Ovary (tissue), 10 donors: ENCODE measurements at regions of chrX and their contacts with region 1.

Region 1: GRCh38 chrX:2934715-2935710 is 5.9 kb upstream of the ARSD start:
- DNase-seq: no peak
- H3K4me3 ChIP-seq: no peak overlapping the region
- H3K27ac ChIP-seq: no peak overlapping the region
- H3K4me1 ChIP-seq: no peaks in the 10 kb centered on the region
- H3K27me3 ChIP-seq: no peaks in the 10 kb centered on the region
- CTCF ChIP-seq: no peak
- EP300 ChIP-seq: no peak
- POLR2A ChIP-seq: no peak

Region 2: GRCh38 chrX:2272337-2272736 is 662.7 kb before region 1 on chrX:
- intact Hi-C with region 1: no loop called
- DNase-seq: no peak
- H3K4me3 ChIP-seq: no peak overlapping the region
- H3K27ac ChIP-seq: no peak overlapping the region
- H3K4me1 ChIP-seq: no peaks in the 10 kb centered on the region
- H3K27me3 ChIP-seq: no peaks in the 10 kb centered on the region
- CTCF ChIP-seq: no peak
- EP300 ChIP-seq: no peak
- POLR2A ChIP-seq: no peak

Region 3: DNA sequence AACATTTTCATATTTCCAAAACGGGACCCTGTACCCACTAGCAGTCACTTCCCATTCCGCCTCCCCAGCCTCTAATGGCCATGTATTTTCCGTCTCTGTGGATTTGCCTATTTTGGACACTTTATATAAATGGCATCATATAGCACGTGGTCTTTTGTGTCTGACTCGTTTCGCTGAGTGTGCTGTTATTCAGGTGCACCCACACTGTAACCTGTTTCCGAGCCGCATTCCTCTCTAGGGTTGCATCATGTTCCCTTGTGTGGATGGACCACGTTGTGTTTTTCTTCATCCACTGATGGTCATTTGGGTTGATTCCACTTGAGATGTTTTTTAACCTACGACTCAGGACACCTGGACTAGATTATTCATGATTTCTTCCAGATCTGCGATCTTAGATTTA is 863.5 kb after region 1 on chrX:
- intact Hi-C with region 1: loop called in 1 of 4 experiments (anchors 10 kb)
- DNase-seq: no peak
- H3K4me3 ChIP-seq: no peak overlapping the region
- H3K27ac ChIP-seq: no peak overlapping the region
- H3K4me1 ChIP-seq: no peaks in the 10 kb centered on the region
- H3K27me3 ChIP-seq: no peaks in the 10 kb centered on the region
- CTCF ChIP-seq: no peak
- EP300 ChIP-seq: no peak
- POLR2A ChIP-seq: no peak